Natural killer cell (primary cell): ENCODE measurements at regions of chr2 and their contacts with region 1.

Region 1: GRCh38 chr2:85813982-85814801 is 60.4 kb downstream of the ATOH8 start:
- DNase-seq: peak; percentile 83 to 87
- ATAC-seq: peak; percentile 91 to 99 (median 96)
- H3K4me3 ChIP-seq: no peak overlapping the region
- H3K4me3 Mint-ChIP-seq: no peak overlapping the region
- H3K27ac ChIP-seq: no peak overlapping the region
- H3K27ac Mint-ChIP-seq: no peak overlapping the region
- H3K4me1 ChIP-seq: peaks cover 3% of the 10 kb centered on the region
- H3K4me1 Mint-ChIP-seq: peaks cover 0 to 6% of the 10 kb centered on the region in 2 donors
- H3K27me3 ChIP-seq: no peaks in the 10 kb centered on the region
- H3K27me3 Mint-ChIP-seq: peaks cover 5 to 11% of the 10 kb centered on the region in 2 donors
- CTCF ChIP-seq: peak; percentile 92

Region 2: DNA sequence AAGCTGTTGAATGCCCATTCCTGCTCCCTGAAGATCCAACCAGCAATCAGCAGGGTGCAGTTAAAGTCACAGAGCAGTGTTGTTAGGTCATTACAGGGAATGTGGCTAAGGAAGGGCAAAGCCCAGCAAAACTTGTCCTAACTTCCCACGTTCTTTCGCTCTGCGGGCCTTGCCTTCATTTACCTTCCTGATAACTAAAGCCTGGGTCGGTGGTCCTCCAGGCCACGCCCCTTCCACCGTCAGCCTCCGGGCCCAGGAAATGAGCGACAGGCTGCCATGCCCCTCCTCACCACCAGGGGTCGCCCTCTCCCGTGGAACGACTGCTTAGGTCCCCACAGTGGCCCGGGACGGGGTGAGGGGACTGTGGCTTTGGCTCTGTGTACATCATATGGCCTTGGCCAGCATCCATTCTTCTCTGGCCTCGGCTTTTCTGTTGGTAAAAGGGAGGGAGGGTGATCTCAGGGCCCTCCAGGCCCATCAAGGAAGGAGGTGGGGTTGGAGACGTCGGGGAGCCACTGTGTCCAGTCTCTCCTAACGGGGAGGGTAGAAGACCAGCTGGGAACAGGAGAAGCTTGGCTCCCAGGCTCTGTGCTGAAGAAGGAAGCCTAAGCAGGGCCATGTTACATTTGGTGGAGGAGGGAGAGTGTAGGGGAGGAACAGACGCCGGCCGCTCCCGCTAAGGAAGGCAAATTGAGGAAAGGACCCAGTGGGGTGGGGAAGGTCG is 393.5 kb before region 1 on chr2:
- intact Hi-C with region 1: loop called (anchors 2 kb)
- DNase-seq: peak; percentile 89 to 93
- ATAC-seq: peak; percentile 74 to 83 (median 75)
- H3K4me3 ChIP-seq: no peak overlapping the region
- H3K4me3 Mint-ChIP-seq: peak overlapping the region; percentile 79
- H3K27ac ChIP-seq: no peak overlapping the region
- H3K27ac Mint-ChIP-seq: peak overlapping the region; percentile 70 to 76
- H3K4me1 ChIP-seq: peaks cover 35% of the 10 kb centered on the region
- H3K4me1 Mint-ChIP-seq: peaks cover 16 to 31% of the 10 kb centered on the region in 2 donors
- H3K27me3 ChIP-seq: no peaks in the 10 kb centered on the region
- H3K27me3 Mint-ChIP-seq: no peaks in the 10 kb centered on the region
- CTCF ChIP-seq: peak; percentile 100

Region 3: GRCh38 chr2:85642725-85643124 is 171.5 kb before region 1 on chr2:
- intact Hi-C with region 1: loop called (anchors 1 kb)
- DNase-seq: no peak
- ATAC-seq: no peak
- H3K4me3 ChIP-seq: no peak overlapping the region
- H3K4me3 Mint-ChIP-seq: no peak overlapping the region
- H3K27ac ChIP-seq: no peak overlapping the region
- H3K27ac Mint-ChIP-seq: no peak overlapping the region
- H3K4me1 ChIP-seq: peaks cover 1% of the 10 kb centered on the region
- H3K4me1 Mint-ChIP-seq: peaks cover 0 to under 1% of the 10 kb centered on the region in 2 donors
- H3K27me3 ChIP-seq: no peaks in the 10 kb centered on the region
- H3K27me3 Mint-ChIP-seq: no peaks in the 10 kb centered on the region
- CTCF ChIP-seq: no peak

Region 4: GRCh38 chr2:85678794-85679672 is 135.2 kb before region 1 on chr2:
- intact Hi-C with region 1: loop called (anchors 1 kb)
- DNase-seq: peak; percentile 80 to 85
- ATAC-seq: peak; percentile 95 to 99 (median 97)
- H3K4me3 ChIP-seq: no peak overlapping the region
- H3K4me3 Mint-ChIP-seq: peak overlapping the region; percentile 22
- H3K27ac ChIP-seq: no peak overlapping the region
- H3K27ac Mint-ChIP-seq: peak overlapping the region in 1 of 2 donors; percentile 13
- H3K4me1 ChIP-seq: peaks cover 49% of the 10 kb centered on the region
- H3K4me1 Mint-ChIP-seq: peaks cover 24 to 27% of the 10 kb centered on the region in 2 donors
- H3K27me3 ChIP-seq: no peaks in the 10 kb centered on the region
- H3K27me3 Mint-ChIP-seq: peaks cover 0 to 4% of the 10 kb centered on the region in 2 donors
- CTCF ChIP-seq: peak; percentile 96

Region 5: DNA sequence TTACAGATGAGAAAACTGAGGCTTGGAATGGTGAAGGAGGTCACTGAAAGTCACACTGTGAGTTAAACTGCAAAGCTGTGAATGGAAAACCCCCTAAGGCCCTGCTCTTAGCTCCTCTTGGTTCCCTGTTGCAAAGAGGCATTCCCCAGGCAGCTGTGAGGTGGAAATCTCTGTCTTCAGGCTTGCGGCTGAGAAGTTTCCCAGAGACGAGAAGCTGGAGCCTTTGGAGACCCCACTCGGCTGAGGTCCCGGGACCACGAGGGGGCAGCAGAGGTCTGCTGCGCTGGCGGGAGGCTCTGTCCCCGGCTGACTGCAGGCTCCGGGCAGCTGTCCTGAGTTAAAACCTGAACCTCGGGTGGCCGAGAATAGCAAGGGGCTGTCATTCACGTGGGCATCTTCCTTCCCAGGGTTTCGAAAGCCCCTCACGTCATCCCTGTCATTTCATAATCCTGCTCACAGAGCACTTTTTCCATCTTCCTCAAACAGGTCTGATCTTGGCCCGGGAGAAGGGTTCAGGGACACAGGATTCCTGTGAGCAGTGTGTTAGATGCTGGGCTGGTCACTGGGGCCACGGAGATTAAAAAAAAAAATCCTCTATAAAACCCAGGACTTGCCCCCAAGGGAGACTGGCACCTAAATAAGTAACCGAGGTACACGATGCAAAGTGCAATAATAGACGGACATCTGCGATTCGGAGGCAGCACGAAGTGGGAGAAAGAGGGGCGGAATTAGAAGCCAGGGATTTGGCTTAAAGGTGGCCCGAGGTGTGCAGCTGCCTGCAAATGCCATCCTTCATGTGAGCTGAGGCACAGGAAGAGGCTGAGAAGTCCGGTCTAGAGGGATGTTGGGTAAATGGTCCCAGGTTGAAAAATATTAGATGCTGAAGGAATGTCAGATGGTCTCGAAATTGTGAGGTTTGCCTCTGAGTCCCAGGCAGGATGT is 85.0 kb before region 1 on chr2:
- intact Hi-C with region 1: loop called (anchors 1 kb)
- DNase-seq: peak; percentile 72 to 80
- ATAC-seq: peak; percentile 86 to 97 (median 96)
- H3K4me3 ChIP-seq: no peak overlapping the region
- H3K4me3 Mint-ChIP-seq: no peak overlapping the region
- H3K27ac ChIP-seq: no peak overlapping the region
- H3K27ac Mint-ChIP-seq: peak overlapping the region in 1 of 2 donors; percentile 11
- H3K4me1 ChIP-seq: peaks cover 12% of the 10 kb centered on the region
- H3K4me1 Mint-ChIP-seq: peaks cover 8 to 12% of the 10 kb centered on the region in 2 donors
- H3K27me3 ChIP-seq: no peaks in the 10 kb centered on the region
- H3K27me3 Mint-ChIP-seq: peaks cover 7 to 8% of the 10 kb centered on the region in 2 donors
- CTCF ChIP-seq: peak; percentile 87

Region 6: DNA sequence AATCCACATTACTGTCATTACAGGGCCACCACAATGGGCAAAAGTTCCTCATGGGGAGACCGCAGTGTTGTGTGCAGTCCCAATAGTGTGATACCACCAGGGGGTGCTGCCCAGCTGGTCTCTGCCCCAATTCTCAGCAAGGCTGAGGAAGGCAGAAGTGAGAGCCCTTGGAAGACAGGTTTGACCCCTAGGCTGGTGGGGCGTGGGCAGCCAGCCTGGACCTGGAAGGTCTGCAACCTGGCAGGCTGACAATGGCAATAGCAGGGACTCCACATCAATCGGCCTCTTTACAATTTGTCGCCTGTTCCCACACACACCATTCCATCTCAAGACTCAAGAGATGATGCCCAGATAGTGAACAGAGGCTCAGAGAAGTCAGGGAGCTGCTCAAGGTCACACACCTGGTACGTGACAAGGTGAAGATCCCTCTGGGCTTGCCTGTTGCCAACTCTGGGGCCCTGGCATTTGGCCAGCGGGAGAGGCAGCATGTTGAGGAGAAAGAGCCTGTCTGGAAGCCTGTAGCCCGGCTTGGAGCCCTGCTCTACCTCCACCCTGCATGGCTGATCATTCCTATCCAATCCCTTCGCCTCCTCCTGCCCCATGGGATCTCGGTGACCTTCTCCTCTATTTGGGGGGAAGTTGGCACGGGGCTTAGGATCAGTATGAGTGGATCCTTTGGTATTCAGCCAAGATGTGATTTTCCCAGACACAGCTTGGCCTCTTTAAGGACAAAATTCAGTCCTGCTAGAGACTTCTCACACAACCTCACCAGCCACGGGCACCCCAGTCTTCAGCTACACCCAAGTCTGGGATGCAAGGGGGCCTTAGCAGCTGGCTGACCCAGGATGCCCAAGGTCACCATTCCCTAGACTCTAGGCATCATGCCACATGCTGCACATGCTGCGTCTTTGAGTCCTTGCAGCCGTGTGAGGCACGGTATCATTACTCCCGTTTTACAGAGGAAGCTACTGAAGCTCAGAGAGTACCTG is 63.3 kb before region 1 on chr2:
- intact Hi-C with region 1: loop called (anchors 1 kb)
- DNase-seq: peak; percentile 51 to 72
- ATAC-seq: peak; percentile 69 to 77 (median 73)
- H3K4me3 ChIP-seq: no peak overlapping the region
- H3K4me3 Mint-ChIP-seq: peak overlapping the region; percentile 3
- H3K27ac ChIP-seq: no peak overlapping the region
- H3K27ac Mint-ChIP-seq: no peak overlapping the region
- H3K4me1 ChIP-seq: peaks cover 43% of the 10 kb centered on the region
- H3K4me1 Mint-ChIP-seq: peaks cover 0 to 27% of the 10 kb centered on the region in 2 donors
- H3K27me3 ChIP-seq: peaks cover 38% of the 10 kb centered on the region
- H3K27me3 Mint-ChIP-seq: peaks cover 46 to 53% of the 10 kb centered on the region in 2 donors
- CTCF ChIP-seq: peak; percentile 75

Region 7: DNA sequence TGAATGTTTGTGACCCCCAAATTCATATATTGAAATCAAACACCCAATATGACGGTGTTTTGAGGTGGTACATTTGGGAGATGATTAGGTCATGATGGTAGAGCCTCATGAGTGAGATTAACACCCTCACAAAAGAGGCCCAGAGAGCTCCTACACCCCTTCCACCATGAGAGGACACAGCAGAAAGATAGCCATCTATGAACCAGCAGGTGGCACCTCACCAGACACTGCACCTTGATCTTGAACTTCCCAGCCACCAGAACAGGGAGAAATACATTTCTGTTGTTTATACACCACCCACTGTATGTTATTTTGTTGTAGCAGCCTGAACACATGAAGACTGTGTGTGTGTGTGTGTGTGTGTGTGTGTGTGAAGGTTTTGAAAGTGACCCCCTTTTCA is 16.5 kb after region 1 on chr2:
- intact Hi-C with region 1: no loop called
- DNase-seq: peak in 1 of 2 donors; percentile 63
- ATAC-seq: peak; percentile 28 to 44 (median 33)
- H3K4me3 ChIP-seq: no peak overlapping the region
- H3K4me3 Mint-ChIP-seq: no peak overlapping the region
- H3K27ac ChIP-seq: no peak overlapping the region
- H3K27ac Mint-ChIP-seq: peak overlapping the region in 1 of 2 donors; percentile 44
- H3K4me1 ChIP-seq: peaks cover 12% of the 10 kb centered on the region
- H3K4me1 Mint-ChIP-seq: peaks cover 19 to 21% of the 10 kb centered on the region in 2 donors
- H3K27me3 ChIP-seq: no peaks in the 10 kb centered on the region
- H3K27me3 Mint-ChIP-seq: no peaks in the 10 kb centered on the region
- CTCF ChIP-seq: peak; percentile 17